ENCODE measurements at regions of chr17 and their contacts with region 1.

Region 1: DNA sequence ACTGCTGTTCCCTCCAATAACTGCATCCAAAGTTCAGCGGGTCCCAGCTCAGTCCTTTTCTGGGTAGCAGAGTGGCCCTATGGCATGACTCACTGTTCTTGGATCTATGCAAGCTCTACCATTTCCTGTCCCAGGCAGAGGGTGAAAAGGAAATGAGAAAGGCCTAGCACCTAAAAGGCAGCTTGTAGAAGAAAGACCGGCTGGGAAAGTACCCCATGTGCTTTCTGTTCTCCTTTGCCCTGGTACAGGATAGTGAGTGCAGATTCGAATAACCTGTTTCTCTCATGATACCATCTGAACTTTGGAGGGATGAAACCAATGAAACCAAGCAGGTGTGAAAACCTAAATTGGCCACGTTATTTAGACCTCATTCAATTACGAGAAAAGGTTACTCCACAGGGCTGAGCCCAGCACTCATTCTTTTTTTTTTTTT is 12.7 kb upstream of the HASPIN start:
- DNase-seq: peak in 1 of 2 donors; percentile 94
- ATAC-seq: peak; percentile 93 to 95 (median 93)
- H3K4me3 ChIP-seq: no peak overlapping the region
- H3K4me3 Mint-ChIP-seq: peak overlapping the region; percentile 67
- H3K27ac ChIP-seq: peak overlapping the region; percentile 44
- H3K27ac Mint-ChIP-seq: peak overlapping the region; percentile 71 to 77
- H3K4me1 ChIP-seq: peaks cover 33% of the 10 kb centered on the region
- H3K4me1 Mint-ChIP-seq: peaks cover 25 to 36% of the 10 kb centered on the region in 2 donors
- H3K27me3 ChIP-seq: no peaks in the 10 kb centered on the region
- H3K27me3 Mint-ChIP-seq: no peaks in the 10 kb centered on the region
- CTCF ChIP-seq: no peak

Region 2: DNA sequence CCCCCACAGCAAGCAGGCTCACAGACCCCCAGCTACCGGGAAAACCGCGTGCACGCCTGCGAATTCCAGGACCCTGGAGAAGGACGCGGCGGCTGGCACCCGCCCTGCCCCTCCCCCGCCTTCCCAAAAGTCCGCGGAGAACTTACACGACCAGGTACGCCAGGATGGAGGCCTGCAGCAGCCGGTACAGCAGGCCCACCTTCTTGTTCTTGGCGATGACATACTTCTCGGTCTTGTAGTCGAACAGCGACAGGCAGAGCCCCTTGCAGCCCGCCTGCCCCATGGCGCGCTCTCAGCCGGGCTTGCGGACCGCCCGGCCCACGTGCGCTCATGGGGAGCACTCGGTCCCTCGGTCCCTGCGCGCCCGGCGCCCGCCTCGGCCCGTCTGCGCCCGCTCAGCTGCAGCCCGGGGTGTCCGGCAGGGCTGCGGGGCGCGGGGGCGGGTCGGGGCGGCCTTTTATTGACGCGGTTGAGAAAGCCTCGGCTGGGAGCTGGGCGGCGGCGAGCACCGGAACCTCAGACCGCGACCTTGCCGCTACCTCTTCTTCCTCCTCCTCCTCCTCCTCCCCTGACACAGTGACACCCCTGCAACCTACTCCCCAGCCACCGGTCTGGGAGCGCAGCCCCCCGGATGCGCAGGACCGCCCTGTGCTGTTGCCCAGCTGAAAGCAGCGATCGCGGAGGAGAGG is 15.1 kb before region 1 on chr17 and contains the start of gene P2RX5:
- intact Hi-C with region 1: loop called (anchors 2 kb)
- DNase-seq: peak; percentile 29 to 63
- ATAC-seq: peak; percentile 46 to 61 (median 52)
- H3K4me3 ChIP-seq: peak within 1 kb of the TSS; percentile 60
- H3K4me3 Mint-ChIP-seq: peak within 1 kb of the TSS; percentile 80
- H3K27ac ChIP-seq: peak within 1 kb of the TSS; percentile 52
- H3K27ac Mint-ChIP-seq: peak within 1 kb of the TSS in 1 of 2 donors; percentile 79
- H3K4me1 ChIP-seq: peaks cover 52% of the 10 kb centered on the region
- H3K4me1 Mint-ChIP-seq: peaks cover 12 to 36% of the 10 kb centered on the region in 2 donors
- H3K27me3 ChIP-seq: peaks cover 3% of the 10 kb centered on the region
- H3K27me3 Mint-ChIP-seq: peaks cover 0 to 5% of the 10 kb centered on the region in 2 donors
- CTCF ChIP-seq: no peak
- total RNA-seq, gene P2RX5: 7.8 to 15.4 (median 9.2) TPM

Measured in natural killer cell (primary cell).